Activated naive CD4-positive, alpha-beta T cell treated with anti-CD3 and anti-CD28 coated beads, Interleukin-2, amount 10 ng/mL, durations not matched to agents 7 days and 5 days (primary cell): ENCODE measurements at regions of chr1 and their contacts with region 1.

Region 1: GRCh38 chr1:165392634-165393571 is 36.4 kb upstream of the LMX1A start:
- DNase-seq: peak; percentile 95
- H3K4me3 Mint-ChIP-seq: peak overlapping the region; percentile 57
- H3K27ac Mint-ChIP-seq: peak overlapping the region; percentile 85
- H3K4me1 Mint-ChIP-seq: peaks cover 23% of the 10 kb centered on the region
- H3K27me3 Mint-ChIP-seq: peaks cover 98% of the 10 kb centered on the region

Region 2: DNA sequence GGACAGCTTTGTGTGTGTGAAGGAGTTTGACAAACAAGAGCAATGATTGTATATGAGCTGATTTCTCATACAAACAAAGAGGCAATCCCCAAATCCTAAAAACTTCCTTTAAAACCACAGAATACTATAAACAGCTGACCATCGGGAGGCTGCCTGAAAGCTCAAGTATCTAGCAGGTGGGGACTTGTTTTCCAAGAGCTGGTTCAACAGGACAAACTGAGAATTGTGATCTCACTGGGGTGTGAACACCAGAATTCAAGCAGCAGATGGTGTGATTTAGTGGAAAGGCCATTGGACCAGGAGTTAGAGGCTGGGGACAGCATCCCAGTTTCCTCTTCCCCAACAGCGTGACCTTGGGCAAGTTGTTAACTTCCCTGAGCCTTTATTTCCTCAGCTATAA is 50.3 kb before region 1 on chr1:
- CTCF ChIA-PET with region 1: no interaction called
- DNase-seq: no peak
- H3K4me3 Mint-ChIP-seq: no peak overlapping the region
- H3K27ac Mint-ChIP-seq: no peak overlapping the region
- H3K4me1 Mint-ChIP-seq: no peaks in the 10 kb centered on the region
- H3K27me3 Mint-ChIP-seq: peaks cover 29% of the 10 kb centered on the region

Region 3: DNA sequence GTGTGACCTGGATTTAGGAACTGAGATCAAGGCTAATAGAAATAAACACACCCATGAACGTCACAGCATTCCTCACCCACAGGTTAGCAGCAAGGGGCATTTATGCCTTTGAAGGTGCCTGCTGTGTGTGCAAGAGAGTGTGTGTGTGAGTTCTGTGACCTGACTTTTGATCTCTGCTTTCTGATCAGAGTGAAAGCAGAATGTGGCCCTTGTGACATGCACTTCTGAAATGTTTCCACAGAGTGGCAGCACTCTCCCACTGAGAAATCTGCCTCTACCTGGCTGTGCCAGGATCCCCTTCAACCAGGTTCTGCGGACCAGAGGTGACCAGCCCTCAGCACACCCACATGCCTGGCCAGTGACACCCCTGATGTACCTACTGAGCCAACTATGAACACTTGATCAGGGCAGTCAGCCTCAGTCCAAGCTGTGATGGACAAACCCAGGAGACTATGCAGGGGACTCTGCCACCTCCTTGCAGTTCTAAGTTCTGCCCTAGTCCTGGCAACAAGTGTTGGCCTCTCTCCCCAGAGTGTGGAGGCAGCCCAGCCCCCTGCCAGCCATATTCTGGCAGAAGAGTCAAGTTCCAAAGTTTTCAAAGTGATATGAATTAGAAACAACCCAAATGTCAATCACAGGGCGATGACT is 11.1 kb after region 1 on chr1:
- CTCF ChIA-PET with region 1: interaction called, 30 read pairs
- DNase-seq: peak; percentile 57
- H3K4me3 Mint-ChIP-seq: no peak overlapping the region
- H3K27ac Mint-ChIP-seq: no peak overlapping the region
- H3K4me1 Mint-ChIP-seq: peaks cover 2% of the 10 kb centered on the region
- H3K27me3 Mint-ChIP-seq: peaks cover 60% of the 10 kb centered on the region

Region 4: DNA sequence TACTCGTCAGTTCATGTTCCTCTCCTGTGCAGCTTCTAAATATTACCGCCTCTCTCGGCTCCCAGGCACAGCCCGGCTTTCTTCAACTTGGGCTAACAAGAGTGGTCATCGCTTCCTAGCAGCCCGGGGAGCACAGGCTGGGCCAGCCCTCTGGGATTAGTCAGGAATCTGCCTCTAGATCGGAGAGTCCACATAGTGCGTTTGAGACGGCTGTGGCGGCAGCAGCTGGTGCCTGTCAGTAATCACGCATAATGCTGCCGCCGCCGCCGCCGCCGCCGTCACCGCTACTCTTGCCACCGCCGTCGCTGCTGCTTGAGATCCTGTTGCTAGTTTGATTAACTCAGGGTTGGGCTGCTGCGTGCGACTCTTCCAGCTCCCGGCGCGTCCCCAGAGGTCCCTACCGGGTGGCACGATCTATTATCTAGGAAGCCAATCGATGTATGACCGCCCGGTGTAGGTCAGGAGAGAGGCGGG is 52.0 kb after region 1 on chr1 and contains the start of gene RXRG:
- CTCF ChIA-PET with region 1: no interaction called
- DNase-seq: peak; percentile 38
- H3K4me3 Mint-ChIP-seq: no peak within 1 kb of the TSS
- H3K27ac Mint-ChIP-seq: no peak within 1 kb of the TSS
- H3K4me1 Mint-ChIP-seq: no peaks in the 10 kb centered on the region
- H3K27me3 Mint-ChIP-seq: peaks cover 32% of the 10 kb centered on the region

Region 5: DNA sequence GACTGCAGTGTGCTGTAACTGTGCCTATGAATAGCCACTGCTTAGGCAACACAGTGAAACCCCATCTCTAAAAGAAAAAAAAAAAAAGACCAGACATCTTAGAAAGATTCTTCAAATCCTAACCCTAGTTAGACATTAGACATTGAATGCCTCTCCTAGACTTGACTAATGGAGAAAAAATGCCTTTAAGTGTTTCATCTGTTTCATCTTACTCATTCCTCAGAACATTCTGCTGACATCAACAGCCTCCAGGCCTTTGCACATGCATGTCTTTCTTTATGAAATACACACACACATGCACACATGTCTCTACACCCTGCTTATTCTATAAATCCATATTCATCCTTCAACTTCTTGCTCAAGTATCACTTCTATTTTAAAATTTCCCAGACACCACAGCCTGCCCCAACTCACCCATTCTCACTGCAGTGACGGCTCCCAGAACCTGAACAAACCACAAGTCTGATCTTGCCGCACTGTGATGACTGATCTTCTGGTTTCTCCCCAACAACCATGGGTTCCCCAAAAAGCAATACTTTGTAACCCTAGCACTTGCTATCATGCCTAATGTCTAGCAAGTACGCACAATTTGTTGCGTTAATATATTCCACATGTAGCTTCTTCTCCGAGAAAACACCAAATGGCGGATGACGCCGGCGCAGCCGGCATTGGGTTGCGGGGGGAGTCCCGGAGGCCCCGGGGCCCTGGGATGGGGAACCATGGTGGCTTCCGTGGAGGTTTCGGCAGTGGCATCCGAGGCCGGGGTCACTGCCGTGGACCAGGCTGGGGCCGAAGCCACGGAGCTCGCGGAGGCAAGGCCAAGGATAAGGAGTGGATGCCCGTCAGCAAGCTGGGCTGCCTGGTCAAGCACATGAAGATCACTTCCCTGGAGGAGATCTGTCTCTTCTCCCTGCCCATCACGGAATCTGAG is 188.3 kb after region 1 on chr1:
- CTCF ChIA-PET with region 1: interaction called, 13 read pairs
- DNase-seq: no peak
- H3K4me3 Mint-ChIP-seq: no peak overlapping the region
- H3K27ac Mint-ChIP-seq: no peak overlapping the region
- H3K4me1 Mint-ChIP-seq: no peaks in the 10 kb centered on the region
- H3K27me3 Mint-ChIP-seq: peaks cover 28% of the 10 kb centered on the region

Region 6: DNA sequence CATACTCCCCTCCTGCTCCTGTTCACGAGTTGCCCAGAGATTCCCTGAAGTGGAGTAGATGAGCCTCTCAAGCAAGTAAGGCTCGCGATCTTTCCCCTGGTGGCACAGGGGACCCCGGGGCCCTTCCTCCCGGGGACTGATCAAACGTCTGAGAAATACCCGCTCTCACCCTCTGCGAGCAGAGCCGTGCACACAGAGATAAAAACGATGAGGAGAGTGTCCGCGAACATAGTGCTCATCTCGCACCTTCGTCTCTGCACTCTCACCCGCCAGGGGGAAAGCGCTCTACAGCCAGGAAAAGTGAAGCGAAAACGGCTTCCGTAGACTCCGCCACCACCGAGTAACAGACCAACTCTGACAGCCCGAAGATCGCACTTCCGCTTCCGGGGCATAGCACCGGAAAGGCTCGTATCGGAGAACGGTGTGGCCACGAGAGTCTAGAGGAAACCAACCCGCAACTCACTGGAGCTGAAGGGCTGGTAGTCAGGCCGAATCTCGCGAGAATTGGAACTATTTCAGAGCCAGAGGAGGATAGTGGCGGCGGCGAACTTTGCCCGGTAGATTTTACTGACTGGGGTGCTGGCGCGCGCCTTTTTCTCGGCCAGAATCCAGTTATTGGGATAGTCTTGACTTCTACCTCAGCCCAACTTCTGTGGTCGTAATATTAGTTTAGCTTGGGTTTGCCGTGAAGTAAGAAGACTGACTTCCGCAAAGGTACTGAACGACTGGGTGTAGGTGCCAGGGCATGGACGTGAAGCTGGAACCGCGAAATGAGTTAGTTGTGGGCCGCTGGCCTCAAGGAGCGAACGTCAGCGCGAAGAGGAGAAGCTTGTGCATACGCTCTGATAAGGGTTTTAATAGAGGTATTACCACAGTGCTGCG is 375.9 kb after region 1 on chr1 and contains the start of gene TMCO1:
- CTCF ChIA-PET with region 1: no interaction called
- DNase-seq: peak; percentile 97
- H3K4me3 Mint-ChIP-seq: peak within 1 kb of the TSS; percentile 98
- H3K27ac Mint-ChIP-seq: peak within 1 kb of the TSS; percentile 99
- H3K4me1 Mint-ChIP-seq: peaks cover 54% of the 10 kb centered on the region
- H3K27me3 Mint-ChIP-seq: no peaks in the 10 kb centered on the region